Caco-2 (cell line): ENCODE measurements at regions of chr6 and their contacts with region 1.

Region 1: GRCh38 chr6:1335367-1336037 is 23.6 kb downstream of the FOXQ1 start:
- DNase-seq: peak; percentile 90 to 94
- H3K4me3 ChIP-seq: no peak overlapping the region
- H3K4me3 Mint-ChIP-seq: peak overlapping the region; percentile 53
- H3K27ac Mint-ChIP-seq: peak overlapping the region; percentile 74
- H3K4me1 ChIP-seq: peaks cover 26% of the 10 kb centered on the region
- H3K4me1 Mint-ChIP-seq: peaks cover 24% of the 10 kb centered on the region
- H3K27me3 ChIP-seq: no peaks in the 10 kb centered on the region
- H3K27me3 Mint-ChIP-seq: no peaks in the 10 kb centered on the region
- CTCF ChIP-seq: no peak

Region 2: DNA sequence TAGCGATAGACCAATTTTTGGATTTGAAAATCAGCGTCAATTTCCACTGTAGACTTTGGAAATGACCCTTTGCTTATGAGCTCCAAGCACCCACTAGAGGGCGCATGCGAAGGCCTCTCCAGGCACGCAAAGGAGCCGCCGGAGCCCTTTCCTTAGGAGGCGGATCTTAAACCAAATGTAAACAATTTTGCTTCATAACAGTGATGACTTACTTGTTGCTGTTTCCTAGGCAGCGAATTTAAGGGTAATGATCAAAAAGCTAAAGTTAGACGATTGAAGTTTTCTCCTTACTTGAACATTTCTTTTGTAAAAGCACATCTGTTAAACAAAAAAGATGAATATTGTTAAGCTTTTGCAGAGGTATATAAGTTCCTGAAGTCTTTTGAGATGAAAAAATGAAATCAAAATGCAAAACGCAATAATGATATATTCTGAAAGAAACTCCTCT is 613.4 kb before region 1 on chr6:
- CTCF ChIA-PET with region 1: interaction called, 6 read pairs
- POLR2A ChIA-PET with region 1: no interaction called
- intact Hi-C with region 1: loop called (anchors 1 kb)
- DNase-seq: peak; percentile 64 to 74
- H3K4me3 ChIP-seq: no peak overlapping the region
- H3K4me3 Mint-ChIP-seq: no peak overlapping the region
- H3K27ac Mint-ChIP-seq: no peak overlapping the region
- H3K4me1 ChIP-seq: no peaks in the 10 kb centered on the region
- H3K4me1 Mint-ChIP-seq: no peaks in the 10 kb centered on the region
- H3K27me3 ChIP-seq: no peaks in the 10 kb centered on the region
- H3K27me3 Mint-ChIP-seq: peaks cover 30% of the 10 kb centered on the region
- CTCF ChIP-seq: peak; percentile 65 to 89

Region 3: DNA sequence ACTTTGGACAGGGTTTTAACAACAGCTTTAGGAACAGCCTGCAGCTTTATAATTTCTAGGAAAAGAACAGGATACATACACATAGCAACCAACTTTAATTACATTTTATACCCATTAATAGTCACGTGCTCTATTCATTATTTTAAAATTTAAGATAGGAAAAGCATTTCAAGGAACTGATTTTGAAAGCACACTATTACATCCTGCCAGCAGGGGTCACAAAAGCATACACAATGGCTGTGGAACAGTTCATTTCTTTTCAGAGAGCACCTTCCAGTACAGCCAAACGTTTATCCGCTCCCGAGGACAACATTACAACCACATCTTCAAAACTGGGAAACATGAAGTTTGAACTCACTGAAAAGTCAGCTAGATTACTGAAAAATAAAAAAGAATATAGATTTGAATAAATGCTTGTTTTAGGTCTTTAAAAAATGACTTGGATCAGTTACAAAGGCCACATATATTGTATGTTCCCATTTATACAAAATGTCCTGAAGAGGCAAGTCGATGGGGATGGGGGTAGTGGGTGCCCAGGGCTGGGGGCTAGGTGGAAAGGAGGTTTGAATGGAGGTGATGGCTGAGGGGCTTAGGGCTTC is 537.9 kb before region 1 on chr6:
- CTCF ChIA-PET with region 1: interaction called, 3 read pairs
- POLR2A ChIA-PET with region 1: no interaction called
- intact Hi-C with region 1: loop called (anchors 1 kb)
- DNase-seq: peak in 1 of 2 experiments; percentile 60
- H3K4me3 ChIP-seq: no peak overlapping the region
- H3K4me3 Mint-ChIP-seq: no peak overlapping the region
- H3K27ac Mint-ChIP-seq: no peak overlapping the region
- H3K4me1 ChIP-seq: no peaks in the 10 kb centered on the region
- H3K4me1 Mint-ChIP-seq: no peaks in the 10 kb centered on the region
- H3K27me3 ChIP-seq: no peaks in the 10 kb centered on the region
- H3K27me3 Mint-ChIP-seq: no peaks in the 10 kb centered on the region
- CTCF ChIP-seq: peak; percentile 73 to 74

Region 4: GRCh38 chr6:1055015-1055921 is 280.2 kb before region 1 on chr6:
- CTCF ChIA-PET with region 1: no interaction called
- POLR2A ChIA-PET with region 1: no interaction called
- intact Hi-C with region 1: loop called (anchors 2 kb)
- DNase-seq: peak; percentile 93
- H3K4me3 ChIP-seq: no peak overlapping the region
- H3K4me3 Mint-ChIP-seq: no peak overlapping the region
- H3K27ac Mint-ChIP-seq: no peak overlapping the region
- H3K4me1 ChIP-seq: peaks cover 52% of the 10 kb centered on the region
- H3K4me1 Mint-ChIP-seq: peaks cover 18% of the 10 kb centered on the region
- H3K27me3 ChIP-seq: no peaks in the 10 kb centered on the region
- H3K27me3 Mint-ChIP-seq: no peaks in the 10 kb centered on the region
- CTCF ChIP-seq: no peak

Region 5: DNA sequence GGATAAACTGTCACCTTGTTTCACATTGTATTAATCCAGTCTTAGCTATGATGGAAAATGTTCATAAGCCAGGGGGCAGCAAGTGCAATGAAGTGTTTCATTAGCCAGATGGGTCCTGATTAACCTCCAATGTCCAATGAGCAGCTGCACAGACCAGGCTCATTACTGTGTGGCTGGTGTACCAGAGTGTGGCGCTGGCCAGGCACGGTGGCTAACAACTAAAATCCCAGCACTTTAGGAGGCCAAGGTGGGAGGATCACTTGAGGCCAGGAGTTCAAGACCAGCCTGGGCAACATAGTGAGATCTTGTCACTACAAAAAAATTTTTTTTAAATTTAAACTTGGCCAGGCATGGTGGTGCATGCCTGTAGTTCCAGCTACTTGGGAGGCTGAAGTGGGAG is 225.3 kb before region 1 on chr6:
- CTCF ChIA-PET with region 1: interaction called, 4 read pairs
- POLR2A ChIA-PET with region 1: no interaction called
- intact Hi-C with region 1: loop called (anchors 1 kb)
- DNase-seq: peak; percentile 25 to 46
- H3K4me3 ChIP-seq: no peak overlapping the region
- H3K4me3 Mint-ChIP-seq: no peak overlapping the region
- H3K27ac Mint-ChIP-seq: peak overlapping the region; percentile 25
- H3K4me1 ChIP-seq: peaks cover 27% of the 10 kb centered on the region
- H3K4me1 Mint-ChIP-seq: peaks cover 24% of the 10 kb centered on the region
- H3K27me3 ChIP-seq: no peaks in the 10 kb centered on the region
- H3K27me3 Mint-ChIP-seq: no peaks in the 10 kb centered on the region
- CTCF ChIP-seq: no peak

Region 6: DNA sequence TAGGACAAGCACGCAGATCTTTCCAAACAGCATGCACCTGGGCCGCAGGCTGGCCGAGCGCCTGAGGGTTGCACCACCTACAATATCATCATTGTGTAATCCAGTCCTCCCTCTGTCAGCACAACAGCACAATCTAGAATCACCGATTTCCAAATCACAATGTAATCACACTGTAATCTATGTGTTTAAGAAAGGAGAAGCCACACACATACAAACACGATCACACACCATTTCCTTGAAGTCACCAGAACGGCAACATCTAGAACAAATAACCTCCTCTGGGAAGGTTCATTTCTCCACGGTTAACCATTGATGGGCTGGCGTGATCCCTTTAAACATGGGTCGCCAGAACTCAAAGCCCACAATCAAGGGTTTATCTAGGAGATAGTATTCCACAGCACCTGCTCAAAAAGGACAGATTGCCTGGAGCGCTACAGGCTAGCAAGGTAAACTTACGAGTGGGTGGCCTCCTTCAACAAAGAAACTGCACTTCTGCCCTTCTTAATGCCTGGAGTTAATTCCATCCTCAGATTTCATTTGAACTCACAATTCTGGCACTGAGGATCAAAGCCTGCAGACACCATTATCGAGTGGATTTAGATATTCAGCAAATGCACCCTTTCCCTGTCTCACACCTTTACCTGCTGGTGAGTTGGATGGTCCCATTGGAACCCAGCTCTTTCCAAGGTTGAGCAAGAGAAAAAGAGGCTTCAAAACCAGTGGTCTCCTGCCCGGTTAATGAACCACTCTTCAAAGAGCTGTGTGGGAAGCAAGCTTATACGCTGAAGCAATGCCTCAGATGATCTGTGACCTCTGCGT is 107.4 kb before region 1 on chr6:
- CTCF ChIA-PET with region 1: no interaction called
- POLR2A ChIA-PET with region 1: interaction called, 7 read pairs
- intact Hi-C with region 1: loop called (anchors 1 kb)
- DNase-seq: peak; percentile 91 to 94
- H3K4me3 ChIP-seq: peak overlapping the region; percentile 0; the same call in 1 of the 2 replicates
- H3K4me3 Mint-ChIP-seq: peak overlapping the region; percentile 52
- H3K27ac Mint-ChIP-seq: peak overlapping the region; percentile 67
- H3K4me1 ChIP-seq: peaks cover 57% of the 10 kb centered on the region
- H3K4me1 Mint-ChIP-seq: peaks cover 63% of the 10 kb centered on the region
- H3K27me3 ChIP-seq: no peaks in the 10 kb centered on the region
- H3K27me3 Mint-ChIP-seq: no peaks in the 10 kb centered on the region
- CTCF ChIP-seq: no peak

Region 7: DNA sequence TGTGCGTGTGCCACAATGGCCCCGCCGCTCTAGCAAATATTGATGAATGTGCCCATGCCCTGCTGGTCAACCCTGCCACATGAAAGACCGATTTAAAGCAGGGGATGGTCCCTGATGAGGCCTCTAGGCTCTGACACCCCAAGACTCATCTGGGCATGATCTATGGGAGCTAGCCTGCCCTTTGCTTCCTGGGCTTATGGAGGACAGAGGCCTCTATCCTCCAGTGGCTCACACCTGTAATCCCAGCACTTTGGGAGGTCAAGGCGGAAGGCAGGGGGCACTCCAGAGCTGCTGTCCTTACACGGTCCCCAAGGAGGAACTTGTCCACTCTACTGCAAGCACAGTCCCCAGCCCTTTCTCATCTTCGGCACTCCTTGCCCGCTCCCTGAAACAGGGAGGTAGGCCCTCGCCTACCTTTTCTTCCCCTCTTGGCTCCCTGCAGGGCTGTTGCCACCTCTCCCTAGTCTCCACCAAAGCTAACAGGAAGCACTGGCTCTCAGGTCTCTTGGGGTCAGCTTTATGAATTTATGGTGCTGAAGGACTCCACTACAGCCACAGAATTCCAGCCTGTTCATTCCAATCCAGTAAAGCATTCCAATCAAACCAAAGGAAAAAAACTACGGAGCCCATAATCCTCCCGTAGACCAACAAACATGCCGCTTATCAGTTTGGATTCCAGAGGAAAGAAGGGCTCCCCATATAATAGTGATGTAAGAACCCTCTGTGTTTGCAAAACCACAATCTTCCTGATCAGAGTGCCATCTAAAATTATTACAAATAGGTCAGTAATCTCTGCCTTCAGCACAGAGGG is 72.3 kb before region 1 on chr6:
- CTCF ChIA-PET with region 1: interaction called, 4 read pairs
- POLR2A ChIA-PET with region 1: interaction called, 3 read pairs
- intact Hi-C with region 1: loop called (anchors 1 kb)
- DNase-seq: peak; percentile 82 to 83
- H3K4me3 ChIP-seq: no peak overlapping the region
- H3K4me3 Mint-ChIP-seq: peak overlapping the region; percentile 73
- H3K27ac Mint-ChIP-seq: peak overlapping the region; percentile 100
- H3K4me1 ChIP-seq: peaks cover 67% of the 10 kb centered on the region
- H3K4me1 Mint-ChIP-seq: peaks cover 30% of the 10 kb centered on the region
- H3K27me3 ChIP-seq: no peaks in the 10 kb centered on the region
- H3K27me3 Mint-ChIP-seq: no peaks in the 10 kb centered on the region
- CTCF ChIP-seq: peak in 1 of 2 experiments; percentile 35

Region 8: GRCh38 chr6:1390133-1390804 is 54.8 kb after region 1 on chr6:
- CTCF ChIA-PET with region 1: no interaction called
- POLR2A ChIA-PET with region 1: no interaction called
- intact Hi-C with region 1: no loop called
- DNase-seq: no peak
- H3K4me3 ChIP-seq: no peak overlapping the region
- H3K4me3 Mint-ChIP-seq: peak overlapping the region; percentile 63
- H3K27ac Mint-ChIP-seq: no peak overlapping the region
- H3K4me1 ChIP-seq: no peaks in the 10 kb centered on the region
- H3K4me1 Mint-ChIP-seq: no peaks in the 10 kb centered on the region
- H3K27me3 ChIP-seq: no peaks in the 10 kb centered on the region
- H3K27me3 Mint-ChIP-seq: peaks cover 6% of the 10 kb centered on the region
- CTCF ChIP-seq: no peak